ENCODE measurements at regions of chr14 and their contacts with region 1.

Region 1: DNA sequence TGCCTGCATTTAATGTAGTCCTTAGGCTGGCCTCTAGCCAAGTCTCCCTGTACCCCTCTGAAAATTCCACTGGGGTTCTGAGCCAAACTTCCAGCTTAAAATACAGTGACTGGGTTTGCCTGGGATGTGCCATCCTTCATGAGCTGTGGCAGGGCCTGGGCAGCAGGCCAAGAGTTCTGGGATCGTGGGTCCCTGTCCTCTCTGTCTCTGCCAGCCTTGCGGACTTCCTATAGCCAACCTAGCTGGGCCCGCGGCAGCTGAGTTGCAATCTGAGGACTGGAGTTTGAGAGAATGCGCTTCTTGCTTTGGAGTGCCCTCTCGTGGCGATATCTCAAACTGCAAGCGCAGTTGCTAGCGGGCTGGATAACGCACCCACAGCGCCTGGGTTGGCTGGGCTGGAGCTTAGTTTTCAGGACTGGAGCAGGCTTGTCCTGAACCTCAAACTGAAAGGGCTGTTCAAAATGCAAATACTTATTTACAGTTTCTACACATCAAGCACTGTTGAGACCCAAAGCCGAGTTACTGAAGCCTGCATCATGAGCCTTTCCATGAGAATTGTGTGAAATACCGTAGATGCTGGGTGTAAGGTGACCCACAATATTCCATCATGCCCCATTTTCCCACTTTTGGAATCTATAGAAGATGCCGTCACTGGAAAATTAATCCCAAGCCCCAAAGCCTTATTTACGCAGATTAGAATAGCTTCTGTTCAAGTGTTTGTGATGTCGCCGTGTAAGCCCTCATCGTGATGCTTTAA is 7.3 kb upstream of the IFI27L2 start:
- DNase-seq: peak; percentile 76
- ATAC-seq: peak; percentile 98
- H3K4me3 ChIP-seq: no peak overlapping the region
- H3K27ac ChIP-seq: no peak overlapping the region
- H3K4me1 ChIP-seq: no peaks in the 10 kb centered on the region
- H3K27me3 ChIP-seq: peaks cover 17% of the 10 kb centered on the region
- CTCF ChIP-seq: peak; percentile 98
- POLR2A ChIP-seq: peak; percentile 29; the same call in 1 of the 2 replicates
- RAD21 ChIP-seq: peak; percentile 98

Region 2: DNA sequence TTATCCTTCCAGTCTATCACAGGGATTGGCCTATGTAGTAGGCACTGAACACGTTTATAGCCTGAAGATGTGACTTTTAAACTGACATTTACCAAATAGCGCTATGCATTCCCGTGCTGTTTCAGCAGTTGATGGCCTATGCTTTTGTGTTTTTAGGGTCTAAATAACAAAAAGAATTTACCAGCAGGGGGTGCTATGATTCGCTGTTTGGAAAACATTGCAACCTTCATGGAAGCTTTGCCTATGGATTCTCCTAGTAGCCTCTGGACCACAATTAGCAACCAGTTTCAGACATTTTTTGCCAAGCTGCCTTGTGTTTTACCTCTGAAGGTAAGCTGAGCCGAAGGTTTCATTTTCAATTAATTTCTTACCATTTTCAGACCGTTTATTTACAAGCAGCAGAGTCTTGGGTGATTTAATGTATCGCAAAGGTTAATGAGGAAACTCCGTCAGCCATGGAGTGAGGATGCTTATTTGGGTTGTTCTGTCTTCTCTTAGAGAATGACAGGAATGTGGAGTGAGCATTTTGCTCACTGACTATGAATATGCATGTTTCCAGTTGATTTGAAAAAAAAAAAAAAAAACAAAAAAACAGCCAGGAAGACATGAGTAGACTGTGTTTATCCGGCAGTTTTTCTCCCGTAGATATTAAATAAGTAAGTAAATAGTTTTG is 481.5 kb before region 1 on chr14:
- CTCF ChIA-PET with region 1: no interaction called
- POLR2A ChIA-PET with region 1: no interaction called
- dilution Hi-C with region 1: no loop called
- in situ Hi-C with region 1: no loop called
- intact Hi-C with region 1: loop called (anchors 5 kb)
- DNase-seq: peak; percentile 35
- ATAC-seq: no peak
- H3K4me3 ChIP-seq: no peak overlapping the region
- H3K27ac ChIP-seq: no peak overlapping the region
- H3K4me1 ChIP-seq: no peaks in the 10 kb centered on the region
- H3K27me3 ChIP-seq: no peaks in the 10 kb centered on the region
- CTCF ChIP-seq: peak; percentile 52
- POLR2A ChIP-seq: no peak
- RAD21 ChIP-seq: peak; percentile 55

Region 3: DNA sequence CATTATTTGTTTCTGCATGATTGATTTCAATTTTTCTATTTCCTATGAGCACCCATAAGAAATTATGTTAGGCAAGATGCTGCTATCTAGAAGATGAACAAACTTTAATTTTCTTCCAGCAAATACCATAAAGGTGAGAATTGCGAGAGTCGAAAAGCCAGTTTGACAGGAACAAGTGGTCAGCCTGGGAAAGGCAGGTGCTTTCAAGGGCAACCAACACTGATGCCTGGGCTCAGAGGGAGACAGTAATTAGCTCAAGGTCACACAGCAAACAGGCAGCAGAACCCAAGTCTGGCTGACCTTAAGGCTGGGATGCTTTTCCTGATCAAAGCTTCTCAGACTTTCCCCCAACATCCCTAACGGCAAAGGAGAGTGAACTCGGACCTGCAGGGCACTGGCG is 117.4 kb before region 1 on chr14:
- CTCF ChIA-PET with region 1: no interaction called
- POLR2A ChIA-PET with region 1: no interaction called
- dilution Hi-C with region 1: no loop called
- in situ Hi-C with region 1: no loop called
- intact Hi-C with region 1: no loop called
- DNase-seq: no peak
- ATAC-seq: no peak
- H3K4me3 ChIP-seq: no peak overlapping the region
- H3K27ac ChIP-seq: no peak overlapping the region
- H3K4me1 ChIP-seq: no peaks in the 10 kb centered on the region
- H3K27me3 ChIP-seq: peaks cover 31% of the 10 kb centered on the region
- CTCF ChIP-seq: no peak
- POLR2A ChIP-seq: no peak
- RAD21 ChIP-seq: no peak

Region 4: DNA sequence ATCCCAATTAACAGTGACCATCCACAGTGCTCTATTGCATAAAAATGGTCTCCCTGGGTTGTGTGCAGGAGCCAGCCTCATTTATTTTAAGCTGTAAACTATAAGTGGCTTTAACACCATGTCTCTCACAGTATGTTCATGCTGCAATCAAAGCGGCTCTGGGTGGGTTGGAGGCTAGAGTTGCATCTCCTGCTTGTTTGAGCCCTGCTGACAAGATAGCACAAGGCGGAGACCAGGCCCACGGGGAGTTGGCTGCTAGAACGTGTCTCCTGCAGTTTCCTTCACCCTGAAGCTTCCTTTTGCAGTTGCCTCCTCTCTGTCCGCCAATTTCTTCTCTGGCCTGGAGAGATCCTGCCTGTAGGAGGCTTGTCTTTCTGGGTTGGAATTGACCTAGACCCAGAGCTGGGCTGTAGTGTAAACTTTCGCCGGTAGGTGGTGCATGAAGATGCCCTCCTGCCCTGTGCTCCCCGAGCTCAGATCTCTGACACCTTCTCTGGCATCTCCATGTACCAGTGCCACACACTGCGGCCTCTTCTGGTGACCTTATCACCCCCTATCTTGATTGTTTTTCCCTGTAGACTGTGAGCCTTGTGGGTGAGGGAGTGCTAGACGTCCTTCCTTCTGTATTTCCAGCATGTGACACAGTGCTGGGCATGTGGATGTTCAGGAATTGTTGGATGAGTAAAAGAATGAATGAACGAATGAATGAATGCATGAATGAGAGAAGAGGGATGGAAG is 100.3 kb before region 1 on chr14:
- CTCF ChIA-PET with region 1: interaction called, 68 read pairs
- POLR2A ChIA-PET with region 1: no interaction called
- dilution Hi-C with region 1: no loop called
- in situ Hi-C with region 1: loop called (anchors 5 kb)
- intact Hi-C with region 1: loop called (anchors 1 kb)
- DNase-seq: peak; percentile 57
- ATAC-seq: peak; percentile 98
- H3K4me3 ChIP-seq: no peak overlapping the region
- H3K27ac ChIP-seq: no peak overlapping the region
- H3K4me1 ChIP-seq: peaks cover under 1% of the 10 kb centered on the region
- H3K27me3 ChIP-seq: no peaks in the 10 kb centered on the region
- CTCF ChIP-seq: peak; percentile 87
- POLR2A ChIP-seq: no peak
- RAD21 ChIP-seq: peak; percentile 75

Region 5: GRCh38 chr14:94080471-94081289 is 56.1 kb before region 1 on chr14 and contains the start of gene DDX24:
- CTCF ChIA-PET with region 1: interaction called, 10 read pairs
- POLR2A ChIA-PET with region 1: no interaction called
- dilution Hi-C with region 1: no loop called
- in situ Hi-C with region 1: no loop called
- intact Hi-C with region 1: no loop called
- DNase-seq: peak; percentile 93
- ATAC-seq: peak; percentile 98
- H3K4me3 ChIP-seq: peak within 1 kb of the TSS; percentile 84
- H3K27ac ChIP-seq: peak within 1 kb of the TSS; percentile 70
- H3K4me1 ChIP-seq: peaks cover 6% of the 10 kb centered on the region
- H3K27me3 ChIP-seq: no peaks in the 10 kb centered on the region
- CTCF ChIP-seq: no peak
- POLR2A ChIP-seq: peak; percentile 95
- RAD21 ChIP-seq: no peak
- total RNA-seq, gene DDX24: 152 and 155 TPM in 2 replicates

Region 6: DNA sequence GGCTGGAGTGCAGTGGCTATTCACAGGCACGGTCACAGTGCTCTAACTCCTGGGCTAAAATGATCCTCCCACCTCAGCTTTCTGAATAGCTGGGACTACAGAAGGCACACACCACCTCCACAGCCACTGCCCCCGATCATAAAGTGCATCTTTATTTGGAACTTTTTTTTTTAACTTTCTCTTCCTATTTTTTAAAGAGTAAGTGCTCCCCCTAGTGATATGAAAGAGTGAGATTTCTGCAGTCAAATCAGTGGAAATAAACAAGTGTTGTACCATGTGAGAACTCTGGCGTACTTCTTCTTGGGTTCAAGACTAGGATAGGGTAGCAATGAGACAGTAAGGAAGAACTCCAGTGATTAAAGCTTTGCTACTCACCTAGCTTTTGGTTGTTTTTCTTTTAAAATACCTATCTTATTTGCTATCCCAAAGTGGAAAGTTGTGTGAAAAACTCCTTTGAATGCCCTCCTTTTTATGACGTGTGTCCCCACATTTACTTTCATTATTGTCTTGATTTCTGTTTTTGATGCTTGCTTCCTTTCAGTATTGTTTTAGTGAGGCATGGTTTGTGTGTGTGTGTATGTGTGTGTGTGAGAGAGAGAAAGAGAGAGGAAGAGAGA is 44.0 kb after region 1 on chr14:
- CTCF ChIA-PET with region 1: interaction called, 8 read pairs
- POLR2A ChIA-PET with region 1: no interaction called
- dilution Hi-C with region 1: no loop called
- in situ Hi-C with region 1: no loop called
- intact Hi-C with region 1: loop called (anchors 2 kb)
- DNase-seq: peak; percentile 42
- ATAC-seq: peak; percentile 59; the same call in 1 of the 2 replicates
- H3K4me3 ChIP-seq: no peak overlapping the region
- H3K27ac ChIP-seq: no peak overlapping the region
- H3K4me1 ChIP-seq: no peaks in the 10 kb centered on the region
- H3K27me3 ChIP-seq: peaks cover 10% of the 10 kb centered on the region
- CTCF ChIP-seq: peak; percentile 66
- POLR2A ChIP-seq: no peak
- RAD21 ChIP-seq: peak; percentile 47

Measured in IMR-90 (cell line).